Ovary (tissue), 10 donors: ENCODE measurements at regions of chr1 and their contacts with region 1.

Region 1: DNA sequence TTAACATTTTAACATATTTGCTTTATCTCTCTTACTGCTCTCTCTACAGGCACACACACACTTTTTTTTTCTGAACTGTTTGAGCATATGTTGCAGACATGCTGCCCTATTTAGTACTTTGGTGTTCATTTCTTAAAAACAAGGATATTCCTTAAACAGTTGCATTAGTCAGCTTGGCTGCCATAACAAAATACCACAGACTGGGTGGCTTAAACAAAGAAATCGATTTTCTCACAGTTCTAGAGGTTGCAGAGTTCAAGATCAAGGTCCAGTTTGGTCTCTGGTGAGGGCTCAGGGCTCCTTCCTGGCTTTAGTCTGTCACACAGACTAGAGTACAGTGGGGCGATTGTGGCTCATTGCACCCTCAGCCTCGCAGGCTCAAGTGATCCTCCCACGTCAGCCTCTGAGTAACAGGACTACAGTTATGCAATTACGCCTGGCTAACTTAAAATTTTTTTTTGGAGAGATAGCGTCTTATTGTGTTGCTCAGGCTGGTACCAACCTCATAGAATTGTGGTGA is 46.7 kb downstream of the RPRD2 start:
- DNase-seq: peak in 1 of 5 donors; percentile 20
- H3K4me3 ChIP-seq: no peak overlapping the region
- H3K27ac ChIP-seq: no peak overlapping the region
- H3K4me1 ChIP-seq: peaks cover 8% of the 10 kb centered on the region
- H3K27me3 ChIP-seq: no peaks in the 10 kb centered on the region
- CTCF ChIP-seq: no peak
- EP300 ChIP-seq: no peak
- POLR2A ChIP-seq: no peak

Region 2: DNA sequence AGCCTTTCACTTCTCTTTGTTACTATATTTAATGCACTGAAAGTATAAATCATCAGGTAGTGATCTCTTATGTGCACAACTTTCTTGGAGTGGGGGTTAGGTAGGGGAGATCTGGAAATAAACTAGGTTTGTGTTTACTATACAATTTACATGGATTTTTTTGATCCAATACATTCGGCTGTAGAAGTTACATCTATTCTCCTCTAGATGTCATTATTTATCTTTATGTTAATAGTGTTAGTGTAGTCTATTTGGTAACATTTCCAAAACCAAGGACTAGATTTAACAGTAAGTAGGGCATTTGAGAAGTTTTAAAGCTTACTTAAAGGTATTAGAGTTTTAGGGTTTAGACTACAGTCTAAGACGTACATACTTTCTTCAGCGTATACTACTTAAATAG is 337.7 kb before region 1 on chr1:
- intact Hi-C with region 1: no loop called
- DNase-seq: no peak
- H3K4me3 ChIP-seq: no peak overlapping the region
- H3K27ac ChIP-seq: no peak overlapping the region
- H3K4me1 ChIP-seq: no peaks in the 10 kb centered on the region
- H3K27me3 ChIP-seq: no peaks in the 10 kb centered on the region
- CTCF ChIP-seq: peak in 2 of 3 donors; percentile 25 to 48
- EP300 ChIP-seq: no peak
- POLR2A ChIP-seq: no peak

Region 3: DNA sequence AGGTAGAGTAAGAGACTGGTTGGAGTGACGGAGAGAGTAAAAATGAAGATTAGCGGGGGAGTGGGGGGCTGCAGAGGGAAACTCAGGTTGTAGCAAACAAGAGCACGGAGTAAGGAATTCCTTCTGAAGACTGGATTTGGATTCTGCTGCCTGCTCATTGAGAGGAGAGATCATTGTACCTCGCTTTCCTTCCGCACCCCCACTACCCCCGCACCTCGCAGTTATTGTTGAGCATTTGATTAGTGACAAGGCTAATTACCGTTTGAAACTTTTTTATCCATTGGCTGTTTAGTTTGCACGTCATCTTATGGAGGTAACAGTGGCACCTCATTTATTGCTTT is 88.8 kb before region 1 on chr1:
- intact Hi-C with region 1: no loop called
- DNase-seq: no peak
- H3K4me3 ChIP-seq: peak overlapping the region; percentile 75
- H3K27ac ChIP-seq: peak overlapping the region; percentile 16 to 79
- H3K4me1 ChIP-seq: peaks cover 5% of the 10 kb centered on the region
- H3K27me3 ChIP-seq: no peaks in the 10 kb centered on the region
- CTCF ChIP-seq: no peak
- EP300 ChIP-seq: no peak
- POLR2A ChIP-seq: no peak

Region 4: GRCh38 chr1:150363426-150364230 is 47.0 kb before region 1 on chr1 and contains the start of gene RPRD2:
- intact Hi-C with region 1: loop called in 1 of 4 experiments (anchors 10 kb)
- DNase-seq: peak; percentile 98 to 100 (median 99)
- H3K4me3 ChIP-seq: peak within 1 kb of the TSS; percentile 55
- H3K27ac ChIP-seq: peak within 1 kb of the TSS; percentile 86 to 98
- H3K4me1 ChIP-seq: peaks cover 2% of the 10 kb centered on the region
- H3K27me3 ChIP-seq: no peaks in the 10 kb centered on the region
- CTCF ChIP-seq: peak in 1 of 3 donors; percentile 45
- EP300 ChIP-seq: no peak
- POLR2A ChIP-seq: peak; percentile 75
- total RNA-seq, gene RPRD2: 18.2 to 55.6 (median 43.9) TPM

Region 5: DNA sequence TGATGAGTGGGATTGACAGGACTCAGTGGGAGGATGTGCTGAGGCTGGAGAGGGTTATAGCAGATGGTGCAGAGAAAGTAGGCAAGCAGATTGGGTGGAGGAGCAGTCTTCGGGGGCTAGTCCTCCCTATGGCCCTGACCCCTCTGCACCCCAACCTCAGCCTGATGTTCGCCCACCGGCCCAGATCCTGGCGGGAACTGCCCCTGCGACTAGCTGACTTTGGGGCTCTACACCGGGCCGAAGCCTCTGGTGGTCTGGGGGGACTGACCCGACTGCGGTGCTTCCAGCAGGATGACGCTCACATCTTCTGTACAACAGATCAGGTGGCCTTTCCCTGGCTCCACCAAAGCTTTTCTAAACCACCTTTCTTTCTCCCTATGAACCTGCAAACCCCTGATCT is 87.7 kb after region 1 on chr1:
- intact Hi-C with region 1: no loop called
- DNase-seq: peak in 1 of 5 donors; percentile 25
- H3K4me3 ChIP-seq: no peak overlapping the region
- H3K27ac ChIP-seq: no peak overlapping the region
- H3K4me1 ChIP-seq: no peaks in the 10 kb centered on the region
- H3K27me3 ChIP-seq: no peaks in the 10 kb centered on the region
- CTCF ChIP-seq: no peak
- EP300 ChIP-seq: no peak
- POLR2A ChIP-seq: no peak

Region 6: GRCh38 chr1:150537732-150538684 is 127.4 kb after region 1 on chr1:
- intact Hi-C with region 1: no loop called
- DNase-seq: no peak
- H3K4me3 ChIP-seq: no peak overlapping the region
- H3K27ac ChIP-seq: no peak overlapping the region
- H3K4me1 ChIP-seq: no peaks in the 10 kb centered on the region
- H3K27me3 ChIP-seq: no peaks in the 10 kb centered on the region
- CTCF ChIP-seq: no peak
- EP300 ChIP-seq: no peak
- POLR2A ChIP-seq: no peak